Activated T-helper 1 cell treated with anti-CD3 and anti-CD28 coated beads, Interleukin-12 subunit alpha, Interleukin-12 subunit beta, Interleukin-2, Interleukin-4 antibody, amounts not matched to agents 30 ng/mL and 10 ng/mL and 1 ng/mL, durations not matched to agents 14 hours and 24 hours and 36 hours (primary cell): ENCODE measurements at regions of chr9 and their contacts with region 1.

Region 1: GRCh38 chr9:113410207-113410864 is at the starts of genes C9orf43 and POLE3:
- DNase-seq: peak; percentile 92
- H3K4me3 Mint-ChIP-seq: peak within 1 kb of the TSS; percentile 89
- H3K27ac Mint-ChIP-seq: peak within 1 kb of the TSS; percentile 99
- H3K4me1 Mint-ChIP-seq: peaks cover 22% of the 10 kb centered on the region
- H3K27me3 Mint-ChIP-seq: no peaks in the 10 kb centered on the region
- total RNA-seq, gene C9orf43: 0.42 and 0.62 TPM in 2 replicates
- total RNA-seq, gene POLE3: 90.9 and 95.7 TPM in 2 replicates

Region 2: GRCh38 chr9:113150670-113151611 is 259.4 kb before region 1 on chr9 and contains the start of gene SLC31A2:
- intact Hi-C with region 1: loop called (anchors 1 kb)
- DNase-seq: peak; percentile 84
- H3K4me3 Mint-ChIP-seq: peak within 1 kb of the TSS; percentile 80
- H3K27ac Mint-ChIP-seq: peak within 1 kb of the TSS; percentile 44
- H3K4me1 Mint-ChIP-seq: peaks cover 34% of the 10 kb centered on the region
- H3K27me3 Mint-ChIP-seq: peaks cover 13% of the 10 kb centered on the region
- total RNA-seq, gene SLC31A2: 6.0 and 6.5 TPM in 2 replicates

Region 3: GRCh38 chr9:113261917-113262671 is 148.2 kb before region 1 on chr9:
- intact Hi-C with region 1: no loop called
- DNase-seq: no peak
- H3K4me3 Mint-ChIP-seq: no peak overlapping the region
- H3K27ac Mint-ChIP-seq: no peak overlapping the region
- H3K4me1 Mint-ChIP-seq: peaks cover 4% of the 10 kb centered on the region
- H3K27me3 Mint-ChIP-seq: no peaks in the 10 kb centered on the region

Region 4: DNA sequence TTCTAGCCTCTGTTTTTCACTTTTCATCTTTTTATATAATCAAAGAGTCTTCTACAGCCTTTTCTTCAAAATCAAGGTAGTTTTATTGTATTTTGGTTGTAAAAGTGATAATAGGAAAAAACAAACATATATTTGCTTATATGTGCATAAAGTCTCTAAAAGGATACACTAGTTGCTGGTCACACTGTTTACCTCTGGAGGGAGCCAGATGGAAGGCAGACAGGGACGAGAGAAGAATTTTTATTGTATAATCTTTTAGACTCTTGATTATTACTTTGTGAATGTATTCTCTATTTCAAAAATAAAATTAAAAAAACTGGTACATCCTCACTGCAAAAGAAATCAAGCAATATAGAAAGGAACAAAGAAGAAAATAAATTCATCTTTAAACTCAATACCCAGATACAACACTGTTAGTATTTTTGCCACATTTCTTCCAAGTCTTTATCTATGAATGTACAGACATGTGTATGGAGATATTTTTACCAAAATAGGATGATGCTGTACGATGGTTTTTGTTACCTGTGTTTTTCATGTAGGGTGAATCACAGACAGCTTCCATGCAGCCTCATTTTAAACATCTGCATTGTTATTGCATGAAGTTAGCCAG is 101.0 kb before region 1 on chr9:
- intact Hi-C with region 1: loop called (anchors 1 kb)
- DNase-seq: peak; percentile 10
- H3K4me3 Mint-ChIP-seq: no peak overlapping the region
- H3K27ac Mint-ChIP-seq: no peak overlapping the region
- H3K4me1 Mint-ChIP-seq: no peaks in the 10 kb centered on the region
- H3K27me3 Mint-ChIP-seq: peaks cover 8% of the 10 kb centered on the region

Region 5: GRCh38 chr9:113361304-113362018 is 48.9 kb before region 1 on chr9:
- intact Hi-C with region 1: no loop called
- DNase-seq: no peak
- H3K4me3 Mint-ChIP-seq: no peak overlapping the region
- H3K27ac Mint-ChIP-seq: peak overlapping the region; percentile 87
- H3K4me1 Mint-ChIP-seq: peaks cover 22% of the 10 kb centered on the region
- H3K27me3 Mint-ChIP-seq: no peaks in the 10 kb centered on the region

Region 6: DNA sequence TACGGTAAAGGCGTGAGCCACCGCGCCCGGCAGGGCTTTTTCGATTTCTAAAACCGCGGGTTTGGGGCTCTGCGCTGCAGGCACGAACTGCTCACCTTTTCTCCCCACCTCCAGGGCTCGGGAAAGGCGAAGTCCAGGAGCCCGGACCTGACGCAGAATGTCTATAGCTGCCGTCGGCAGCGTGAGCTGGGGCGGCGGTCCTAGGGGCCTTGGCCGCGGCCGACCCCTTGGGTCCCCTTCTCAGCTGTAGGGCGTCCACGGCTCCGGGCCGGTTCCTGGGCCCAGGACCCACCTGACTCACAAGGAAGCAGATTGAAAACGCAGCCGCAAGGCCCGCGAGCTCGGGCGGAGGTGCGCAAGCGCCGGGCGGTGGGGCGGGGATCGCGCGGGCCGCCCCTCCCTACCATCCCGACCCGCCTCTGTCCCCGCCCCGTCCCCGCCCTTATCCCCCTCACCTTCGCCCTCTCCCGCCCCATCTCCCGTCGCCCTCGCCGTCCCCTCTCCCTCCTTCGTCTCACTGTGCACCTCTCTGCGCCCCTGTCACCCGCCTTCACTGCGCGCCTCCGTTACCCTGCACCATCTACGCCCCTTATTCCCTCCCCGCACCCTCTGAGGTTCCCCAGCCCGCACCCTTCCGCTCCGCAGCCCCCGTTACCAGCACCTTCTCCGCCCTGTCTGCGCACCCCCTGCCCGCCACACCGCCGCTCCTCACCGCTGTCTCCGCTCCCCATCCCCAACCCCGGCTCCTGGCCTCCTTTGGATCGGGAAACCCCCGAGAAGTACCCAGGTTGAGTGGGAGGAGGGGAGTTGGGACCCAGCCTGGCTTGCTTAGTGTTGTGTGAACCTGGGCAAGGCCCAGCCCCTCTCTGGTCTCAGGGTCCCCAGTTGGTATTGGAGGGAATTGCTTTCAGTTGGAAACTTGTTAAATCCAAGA is 33.4 kb before region 1 on chr9 and contains the start of gene HDHD3:
- intact Hi-C with region 1: loop called (anchors 1 kb)
- DNase-seq: peak; percentile 78
- H3K4me3 Mint-ChIP-seq: peak within 1 kb of the TSS; percentile 83
- H3K27ac Mint-ChIP-seq: peak within 1 kb of the TSS; percentile 71
- H3K4me1 Mint-ChIP-seq: peaks cover 18% of the 10 kb centered on the region
- H3K27me3 Mint-ChIP-seq: no peaks in the 10 kb centered on the region
- total RNA-seq, gene HDHD3: 15.7 and 18.5 TPM in 2 replicates

Region 7: DNA sequence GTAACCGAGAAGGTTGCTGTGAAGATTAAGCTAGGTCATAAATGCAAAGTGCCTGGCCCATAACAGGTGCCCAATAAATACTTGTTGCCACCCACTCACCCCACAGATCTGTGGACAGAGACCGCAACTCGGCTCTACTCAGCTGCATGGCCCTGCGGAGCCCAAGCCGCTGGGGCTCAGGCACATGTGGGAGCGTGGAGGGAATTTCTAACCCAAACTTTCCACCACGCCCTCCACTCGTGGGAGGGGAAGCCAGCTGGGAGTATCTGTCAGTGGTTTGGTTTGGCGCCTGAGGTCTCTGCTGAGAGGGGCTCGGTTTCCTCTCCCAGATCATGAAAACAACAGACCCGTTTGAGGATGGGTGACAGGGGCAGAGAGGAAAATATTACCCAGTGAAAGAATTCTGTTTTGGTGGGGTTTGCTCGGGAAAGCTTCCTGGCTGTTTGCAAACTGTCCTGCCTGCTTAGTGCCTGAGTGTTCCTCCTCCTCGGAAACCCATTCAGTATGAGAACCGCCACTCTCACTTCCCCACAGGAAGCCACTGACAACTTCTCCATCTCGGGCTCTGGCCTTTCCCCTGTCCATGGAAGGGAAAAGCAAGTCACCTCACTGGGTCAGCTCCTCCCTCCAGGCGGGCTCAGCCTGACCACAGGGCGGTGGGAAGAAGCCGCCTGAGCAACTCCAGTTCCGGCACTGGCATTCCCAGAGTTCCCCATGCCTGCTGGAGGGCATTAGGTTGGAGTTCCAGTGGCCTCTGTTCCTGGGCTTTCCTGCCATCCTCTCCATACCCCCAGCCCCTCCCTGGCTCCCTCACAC is 113.3 kb after region 1 on chr9:
- intact Hi-C with region 1: loop called (anchors 1 kb)
- DNase-seq: peak; percentile 54
- H3K4me3 Mint-ChIP-seq: peak overlapping the region; percentile 77
- H3K27ac Mint-ChIP-seq: peak overlapping the region; percentile 86
- H3K4me1 Mint-ChIP-seq: peaks cover 85% of the 10 kb centered on the region
- H3K27me3 Mint-ChIP-seq: peaks cover 2% of the 10 kb centered on the region

Region 8: GRCh38 chr9:114385412-114386181 is 975.3 kb after region 1 on chr9:
- intact Hi-C with region 1: loop called (anchors 10 kb)
- DNase-seq: peak; percentile 89
- H3K4me3 Mint-ChIP-seq: peak overlapping the region; percentile 90
- H3K27ac Mint-ChIP-seq: peak overlapping the region; percentile 93
- H3K4me1 Mint-ChIP-seq: peaks cover 69% of the 10 kb centered on the region
- H3K27me3 Mint-ChIP-seq: no peaks in the 10 kb centered on the region